Gastrocnemius medialis (tissue), 4 donors: ENCODE measurements at regions of chr17 and their contacts with region 1.

Region 1: DNA sequence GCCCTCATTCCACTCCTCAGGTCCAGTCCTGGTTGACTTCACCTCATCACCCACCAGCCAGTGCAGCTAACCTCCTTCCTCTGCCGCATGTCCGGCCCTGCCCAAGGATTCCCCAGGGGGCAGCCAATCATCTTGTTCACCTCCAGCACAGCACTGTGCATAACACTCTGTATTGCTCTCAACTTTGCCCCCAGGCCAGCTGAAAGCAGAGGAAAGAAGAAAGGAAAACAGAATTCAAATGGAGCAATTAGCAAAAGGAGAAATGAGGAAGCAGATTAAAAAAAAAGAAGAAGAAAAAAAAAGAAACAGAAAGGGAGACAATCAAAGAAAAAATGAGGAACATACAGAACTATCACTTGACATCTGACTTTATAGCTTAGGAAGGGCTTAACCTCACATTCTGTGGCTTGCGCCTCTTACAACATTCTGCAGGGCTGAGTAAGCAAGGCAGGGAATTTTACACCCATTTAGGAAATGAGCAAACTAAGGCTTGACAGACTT is 26.1 kb downstream of the GAS7 start:
- DNase-seq: no peak
- ATAC-seq: no peak
- H3K4me3 ChIP-seq: no peak overlapping the region
- H3K27ac ChIP-seq: no peak overlapping the region
- H3K4me1 ChIP-seq: no peaks in the 10 kb centered on the region
- H3K27me3 ChIP-seq: peaks cover 0 to 5% (median 5%) of the 10 kb centered on the region in 3 donors
- CTCF ChIP-seq: no peak
- POLR2A ChIP-seq: no peak

Region 2: DNA sequence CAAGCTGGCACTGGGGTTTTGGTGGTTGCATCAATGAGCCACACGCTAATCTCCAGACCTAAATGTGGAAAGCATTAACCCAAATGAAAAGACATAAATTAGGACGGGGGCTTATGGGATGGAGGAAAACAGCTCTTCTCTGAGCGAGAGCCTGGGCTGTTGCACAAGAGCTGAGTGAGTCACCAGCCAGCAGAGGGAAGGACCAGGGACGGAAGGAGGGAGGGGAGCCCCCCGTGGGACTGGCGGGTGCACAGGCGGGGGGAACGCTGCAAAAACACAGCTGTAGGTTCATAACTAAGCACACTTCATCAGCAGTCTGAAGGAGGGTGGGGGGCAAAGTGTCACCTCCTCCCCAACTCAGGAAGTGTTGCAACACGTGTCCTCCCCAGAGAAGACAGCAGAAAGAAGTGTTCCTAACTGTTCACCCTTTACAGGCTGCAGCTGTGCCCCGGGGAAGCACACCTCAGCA is 57.2 kb before region 1 on chr17:
- in situ Hi-C with region 1: loop called in 1 of 4 experiments (anchors 10 kb)
- intact Hi-C with region 1: no loop called
- DNase-seq: peak; percentile 86 to 90
- ATAC-seq: peak; percentile 79 to 84
- H3K4me3 ChIP-seq: peak overlapping the region in 2 of 4 donors; percentile 4 to 8
- H3K27ac ChIP-seq: peak overlapping the region; percentile 63 to 78 (median 68)
- H3K4me1 ChIP-seq: peaks cover 0 to 6% of the 10 kb centered on the region in 2 donors
- H3K27me3 ChIP-seq: no peaks in the 10 kb centered on the region
- CTCF ChIP-seq: no peak
- POLR2A ChIP-seq: no peak